CD4-positive, alpha-beta memory T cell (primary cell): ENCODE measurements at regions of chr1 and their contacts with region 1.

Region 1: GRCh38 chr1:108877348-108878159 is 769 bp downstream of the GPSM2 start:
- DNase-seq: no peak
- H3K4me3 ChIP-seq: peak overlapping the region; percentile 24 to 69
- H3K4me3 Mint-ChIP-seq: peak overlapping the region; percentile 92 to 97 (median 95)
- H3K27ac ChIP-seq: peak overlapping the region; percentile 42
- H3K27ac Mint-ChIP-seq: peak overlapping the region; percentile 66 to 96 (median 91)
- H3K4me1 ChIP-seq: peaks cover 16% of the 10 kb centered on the region
- H3K4me1 Mint-ChIP-seq: peaks cover 7 to 12% (median 8%) of the 10 kb centered on the region in 4 donors
- H3K27me3 ChIP-seq: no peaks in the 10 kb centered on the region
- H3K27me3 Mint-ChIP-seq: peaks cover 0 to 1% of the 10 kb centered on the region in 2 donors

Region 2: GRCh38 chr1:108732398-108732797 is 145.2 kb before region 1 on chr1:
- CTCF ChIA-PET with region 1: no interaction called
- POLR2A ChIA-PET with region 1: no interaction called
- intact Hi-C with region 1: no loop called
- DNase-seq: no peak
- H3K4me3 ChIP-seq: no peak overlapping the region
- H3K4me3 Mint-ChIP-seq: no peak overlapping the region
- H3K27ac ChIP-seq: no peak overlapping the region
- H3K27ac Mint-ChIP-seq: no peak overlapping the region
- H3K4me1 ChIP-seq: no peaks in the 10 kb centered on the region
- H3K4me1 Mint-ChIP-seq: no peaks in the 10 kb centered on the region
- H3K27me3 ChIP-seq: no peaks in the 10 kb centered on the region
- H3K27me3 Mint-ChIP-seq: peaks cover 7 to 12% of the 10 kb centered on the region in 2 donors

Region 3: DNA sequence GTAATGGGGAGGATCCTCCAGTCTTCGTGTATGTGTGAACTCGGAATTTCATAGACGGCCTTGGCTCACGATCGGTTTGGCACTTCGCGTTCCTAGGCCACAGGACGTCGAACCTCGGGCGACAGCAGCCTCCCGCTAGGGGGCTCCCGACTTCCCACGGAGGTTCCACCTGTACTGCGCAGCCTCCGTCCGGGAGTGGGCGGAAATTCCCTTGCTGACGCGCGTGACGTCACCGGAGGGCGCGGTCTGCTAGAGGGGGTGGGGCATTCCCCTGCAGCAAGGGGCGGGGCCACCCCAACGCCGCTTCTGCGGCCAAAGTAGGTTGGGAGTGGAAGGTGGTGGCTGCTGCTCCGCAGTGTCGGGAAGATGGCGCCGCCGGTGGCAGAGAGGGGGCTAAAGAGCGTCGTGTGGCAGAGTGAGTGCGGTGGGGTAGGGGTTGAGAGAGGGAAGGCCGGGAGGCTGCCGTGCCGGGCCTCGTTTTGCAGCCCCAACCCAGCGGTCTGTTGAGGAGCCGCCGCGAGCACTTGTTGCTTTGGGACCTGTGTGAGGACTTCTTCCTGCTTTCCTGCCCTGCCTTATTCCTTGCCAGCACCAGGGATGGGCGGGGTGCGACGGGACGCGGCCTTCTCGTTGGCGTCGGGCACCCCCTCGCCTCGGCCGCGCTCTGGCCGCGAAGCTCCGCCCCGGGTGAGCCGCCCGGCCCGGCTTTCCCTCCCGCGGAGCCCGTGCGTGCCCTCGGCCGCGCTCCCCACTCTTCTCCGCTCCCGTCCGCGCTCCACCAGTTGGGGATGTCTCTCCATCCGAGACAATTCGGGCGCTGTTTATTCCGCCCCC is 131.0 kb before region 1 on chr1 and contains the start of gene STXBP3:
- CTCF ChIA-PET with region 1: no interaction called
- POLR2A ChIA-PET with region 1: no interaction called
- intact Hi-C with region 1: loop called (anchors 1 kb)
- DNase-seq: peak; percentile 98 to 99 (median 99)
- H3K4me3 ChIP-seq: peak within 1 kb of the TSS; percentile 57 to 85
- H3K4me3 Mint-ChIP-seq: peak within 1 kb of the TSS; percentile 94 to 100 (median 99)
- H3K27ac ChIP-seq: peak within 1 kb of the TSS; percentile 95
- H3K27ac Mint-ChIP-seq: peak within 1 kb of the TSS; percentile 94 to 100 (median 99)
- H3K4me1 ChIP-seq: peaks cover 41% of the 10 kb centered on the region
- H3K4me1 Mint-ChIP-seq: peaks cover 25 to 47% (median 34%) of the 10 kb centered on the region in 4 donors
- H3K27me3 ChIP-seq: no peaks in the 10 kb centered on the region
- H3K27me3 Mint-ChIP-seq: no peaks in the 10 kb centered on the region
- total RNA-seq, gene STXBP3: 90.9 to 92.5 TPM

Region 4: DNA sequence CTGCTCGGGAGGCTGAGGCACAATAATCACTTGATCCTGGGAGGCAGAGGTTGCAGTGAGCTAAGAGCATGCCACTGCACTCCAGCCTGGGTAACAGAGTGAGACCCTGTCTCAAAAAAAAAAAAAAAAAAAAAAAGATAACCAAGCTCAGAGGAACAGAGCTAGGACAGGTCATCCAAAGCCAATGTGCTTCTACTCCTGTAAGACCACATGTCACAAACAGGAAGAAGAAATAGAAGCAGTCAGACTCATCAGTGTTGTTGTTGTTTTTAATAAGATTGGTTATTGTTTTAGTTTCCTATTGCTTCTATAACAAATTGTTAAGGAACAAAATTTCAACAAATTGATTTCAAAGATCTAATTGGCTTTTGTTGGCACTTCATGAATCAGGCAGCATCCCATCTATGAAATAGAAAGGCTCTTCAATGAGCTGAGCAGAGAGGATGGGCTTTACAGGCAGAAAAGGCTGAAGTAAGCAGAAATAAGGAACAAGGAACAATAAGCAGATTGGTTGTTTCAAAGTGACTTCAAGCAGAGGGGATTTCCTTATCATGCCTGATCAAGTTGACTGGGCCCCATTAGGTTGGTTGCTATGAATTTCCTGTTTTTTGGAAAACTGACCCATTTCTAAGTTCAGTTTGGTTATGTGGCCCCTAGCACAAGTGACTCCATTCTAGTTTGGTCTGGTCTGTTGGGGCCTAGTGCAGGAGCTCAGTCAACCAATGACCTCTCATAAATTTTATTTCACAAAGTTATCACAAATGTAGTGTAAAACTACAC is 14.7 kb before region 1 on chr1:
- CTCF ChIA-PET with region 1: no interaction called
- POLR2A ChIA-PET with region 1: no interaction called
- intact Hi-C with region 1: no loop called
- DNase-seq: no peak
- H3K4me3 ChIP-seq: no peak overlapping the region
- H3K4me3 Mint-ChIP-seq: no peak overlapping the region
- H3K27ac ChIP-seq: no peak overlapping the region
- H3K27ac Mint-ChIP-seq: no peak overlapping the region
- H3K4me1 ChIP-seq: no peaks in the 10 kb centered on the region
- H3K4me1 Mint-ChIP-seq: peaks cover 0 to 2% (median under 1%) of the 10 kb centered on the region in 4 donors
- H3K27me3 ChIP-seq: no peaks in the 10 kb centered on the region
- H3K27me3 Mint-ChIP-seq: peaks cover 8 to 23% of the 10 kb centered on the region in 2 donors

Region 5: DNA sequence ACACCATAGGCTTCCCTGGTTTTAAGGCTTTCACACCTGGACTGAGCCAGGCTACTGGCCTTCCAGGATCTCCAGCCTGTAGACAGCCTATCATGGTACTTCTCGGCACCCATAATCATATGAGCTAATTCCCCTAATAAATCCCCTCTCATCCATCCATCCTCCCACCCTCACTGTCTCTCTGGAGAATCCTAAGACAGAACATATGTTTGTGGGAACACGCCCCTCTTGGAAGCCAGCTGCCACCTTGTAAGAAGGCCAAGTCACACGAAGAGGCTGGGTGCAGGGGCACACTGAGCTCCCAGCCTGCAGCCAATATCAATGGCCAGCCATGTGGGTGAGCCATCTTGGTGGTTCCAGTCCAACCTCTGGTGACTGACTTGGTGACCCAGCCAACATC is 78.3 kb after region 1 on chr1:
- CTCF ChIA-PET with region 1: no interaction called
- POLR2A ChIA-PET with region 1: no interaction called
- intact Hi-C with region 1: loop called (anchors 2 kb)
- DNase-seq: no peak
- H3K4me3 ChIP-seq: no peak overlapping the region
- H3K4me3 Mint-ChIP-seq: peak overlapping the region in 3 of 8 donors; percentile 39 to 65 (median 62)
- H3K27ac ChIP-seq: no peak overlapping the region
- H3K27ac Mint-ChIP-seq: peak overlapping the region in 6 of 7 donors; percentile 70 to 98 (median 88)
- H3K4me1 ChIP-seq: peaks cover 32% of the 10 kb centered on the region
- H3K4me1 Mint-ChIP-seq: peaks cover 32 to 53% (median 42%) of the 10 kb centered on the region in 4 donors
- H3K27me3 ChIP-seq: no peaks in the 10 kb centered on the region
- H3K27me3 Mint-ChIP-seq: no peaks in the 10 kb centered on the region

Region 6: DNA sequence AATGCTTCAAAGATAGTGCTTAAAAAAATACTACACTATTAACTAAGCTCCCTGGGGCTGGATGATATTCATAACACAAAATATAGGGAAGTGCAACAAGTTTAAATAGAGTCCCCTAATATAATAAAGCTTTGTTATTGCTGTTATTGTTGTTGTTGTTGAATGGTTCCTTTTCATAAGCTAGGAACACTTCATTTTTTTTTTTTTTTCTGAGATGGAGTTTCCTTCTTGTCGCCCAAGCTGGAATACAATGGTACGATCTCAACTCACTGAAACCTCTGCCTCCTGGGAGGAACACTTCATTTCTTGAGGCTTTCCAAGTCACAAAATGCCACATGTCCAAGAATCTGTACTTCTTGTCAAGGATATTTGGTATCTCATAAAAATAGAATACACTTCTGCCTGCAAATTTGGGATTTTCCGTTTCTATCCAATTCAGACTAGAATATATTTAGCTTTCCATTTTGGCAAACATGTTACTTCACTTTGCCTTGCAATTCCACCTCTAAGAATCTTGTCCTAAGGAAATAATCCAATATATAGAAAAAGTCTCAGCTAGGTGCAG is 143.2 kb after region 1 on chr1:
- CTCF ChIA-PET with region 1: no interaction called
- POLR2A ChIA-PET with region 1: no interaction called
- intact Hi-C with region 1: no loop called
- DNase-seq: no peak
- H3K4me3 ChIP-seq: no peak overlapping the region
- H3K4me3 Mint-ChIP-seq: no peak overlapping the region
- H3K27ac ChIP-seq: no peak overlapping the region
- H3K27ac Mint-ChIP-seq: no peak overlapping the region
- H3K4me1 ChIP-seq: no peaks in the 10 kb centered on the region
- H3K4me1 Mint-ChIP-seq: peaks cover 0 to 4% (median 1%) of the 10 kb centered on the region in 4 donors
- H3K27me3 ChIP-seq: no peaks in the 10 kb centered on the region
- H3K27me3 Mint-ChIP-seq: no peaks in the 10 kb centered on the region